ENCODE measurements at regions of chr4 and their contacts with region 1.

Region 1: GRCh38 chr4:169619959-169620879 is at the start of gene CLCN3:
- DNase-seq: peak; percentile 93

Region 2: GRCh38 chr4:169634975-169635374 is 14.8 kb after region 1 on chr4:
- CTCF ChIA-PET with region 1: no interaction called
- POLR2A ChIA-PET with region 1: interaction called, 13 read pairs
- DNase-seq: peak; percentile 18

Region 3: GRCh38 chr4:169640261-169640870 is 20.1 kb after region 1 on chr4:
- CTCF ChIA-PET with region 1: no interaction called
- POLR2A ChIA-PET with region 1: interaction called, 11 read pairs
- DNase-seq: no peak

Region 4: GRCh38 chr4:169659716-169660670 is 39.8 kb after region 1 on chr4:
- CTCF ChIA-PET with region 1: no interaction called
- POLR2A ChIA-PET with region 1: interaction called, 41 read pairs
- DNase-seq: peak; percentile 80

Region 5: DNA sequence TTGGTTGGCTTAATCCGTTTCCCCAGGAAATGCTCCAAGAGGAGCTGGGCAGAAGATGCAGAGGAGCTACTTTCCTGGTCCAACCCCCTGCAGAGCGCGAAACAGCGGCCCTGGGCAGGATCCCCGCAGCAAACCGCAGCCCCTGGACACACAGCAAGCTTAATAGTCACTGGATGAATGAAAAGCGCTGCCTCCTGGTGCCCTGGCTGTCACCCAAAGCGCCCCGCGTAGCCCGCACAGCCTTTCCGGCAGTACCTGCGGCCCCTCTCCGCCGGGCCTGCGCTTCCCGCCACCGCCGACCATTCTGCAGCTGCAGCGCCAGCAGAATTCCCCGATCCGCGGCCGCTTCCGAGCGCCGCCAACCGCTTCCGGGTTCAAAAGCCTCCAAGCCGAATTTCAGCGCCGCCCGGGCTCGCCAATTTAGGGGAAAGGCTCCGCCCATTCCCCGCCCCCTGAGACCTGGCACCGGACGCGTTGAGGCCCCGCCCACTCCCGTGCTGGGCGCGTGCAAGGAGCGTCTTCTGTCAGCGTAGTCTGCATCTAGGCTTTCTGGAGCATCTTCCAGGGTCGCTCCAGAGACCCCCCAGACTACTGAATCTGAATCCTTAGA is 137.5 kb after region 1 on chr4 and contains the start of gene HPF1:
- CTCF ChIA-PET with region 1: interaction called, 3 read pairs
- POLR2A ChIA-PET with region 1: interaction called, 10 read pairs
- DNase-seq: peak; percentile 95

Region 6: DNA sequence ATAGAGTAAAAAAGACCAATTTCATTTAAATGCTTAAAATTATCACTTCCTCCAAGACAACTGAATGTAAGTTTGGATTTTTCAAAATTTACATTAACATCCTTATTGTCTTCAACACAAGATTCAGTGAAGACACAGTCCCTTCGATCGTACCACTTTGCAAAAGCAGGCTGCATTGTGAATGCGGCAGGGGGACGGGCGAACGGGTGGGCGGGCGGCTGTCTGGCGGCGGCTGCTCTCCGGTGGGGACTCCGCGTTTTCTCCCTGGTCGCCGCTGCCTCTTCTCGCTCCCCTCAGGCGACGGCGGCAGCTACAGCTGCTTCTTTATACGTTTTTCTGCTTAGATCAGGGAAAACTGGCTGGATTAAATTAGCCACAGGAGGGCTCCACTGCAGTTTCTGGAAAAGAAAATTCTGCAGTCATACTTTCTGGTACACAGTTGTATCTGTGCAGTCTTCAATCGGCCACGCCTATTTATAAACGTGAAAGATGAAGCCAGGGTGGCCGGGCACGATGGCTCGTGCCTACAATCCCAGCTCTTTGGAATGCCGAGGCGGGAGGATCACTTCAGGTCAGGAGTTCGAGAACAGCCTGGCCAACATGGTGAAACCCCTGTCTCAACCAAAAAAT is 171.4 kb after region 1 on chr4:
- CTCF ChIA-PET with region 1: no interaction called
- POLR2A ChIA-PET with region 1: no interaction called
- DNase-seq: peak; percentile 72